Activated CD4-positive, alpha-beta memory T cell treated with anti-CD3 and anti-CD28 coated beads, Interleukin-2, amount 10 ng/mL, durations not matched to agents 7 days and 5 days (primary cell): ENCODE measurements at regions of chr12 and their contacts with region 1.

Region 1: DNA sequence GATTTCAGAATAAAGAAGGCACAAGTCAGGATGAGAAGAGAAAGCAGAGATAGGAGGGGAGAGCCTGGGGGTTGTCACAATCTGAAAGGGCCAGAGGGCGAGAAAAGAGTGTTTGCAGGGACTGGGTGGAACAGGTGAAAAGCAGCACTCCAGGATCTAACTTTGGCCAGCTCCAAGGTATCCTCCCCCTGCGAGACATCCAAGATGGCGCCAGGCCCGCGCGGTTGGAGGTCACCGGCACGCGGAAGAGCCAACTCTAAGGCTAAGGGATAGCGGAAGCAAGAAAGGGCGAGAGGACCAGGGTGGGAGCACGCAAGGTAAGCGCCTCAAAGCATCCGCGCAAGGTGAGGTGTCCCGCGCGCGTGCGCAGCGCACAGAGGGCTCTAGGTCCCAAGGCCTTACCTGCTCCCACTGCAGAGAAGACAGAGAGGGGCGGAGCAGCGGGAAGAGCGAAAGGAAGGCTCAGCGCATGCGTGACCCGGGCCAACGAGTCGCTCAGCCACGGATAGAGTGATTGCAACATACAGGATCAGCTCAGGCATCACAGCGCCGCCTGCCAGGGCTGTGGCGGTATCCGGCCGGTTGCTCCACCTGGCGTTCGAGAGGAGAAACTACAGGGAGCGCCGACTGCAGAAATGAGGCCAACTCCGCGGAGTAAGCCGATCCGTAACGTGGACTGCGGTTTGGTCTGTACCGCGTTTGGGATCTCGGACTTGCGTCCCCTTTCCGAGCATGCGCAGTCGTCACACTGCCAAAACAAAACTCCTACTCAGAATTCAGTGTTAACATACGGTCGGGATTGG is at the start of gene ATP5MC2:
- DNase-seq: peak; percentile 97
- H3K4me3 Mint-ChIP-seq: peak within 1 kb of the TSS; percentile 85
- H3K27ac Mint-ChIP-seq: peak within 1 kb of the TSS; percentile 91
- H3K4me1 Mint-ChIP-seq: peaks cover 40% of the 10 kb centered on the region
- H3K27me3 Mint-ChIP-seq: peaks cover 29% of the 10 kb centered on the region
- total RNA-seq, gene ATP5MC2: 341 to 347 TPM

Region 2: GRCh38 chr12:53500776-53501614 is 174.9 kb before region 1 on chr12 and contains the start of gene TARBP2:
- CTCF ChIA-PET with region 1: interaction called, 5 read pairs
- POLR2A ChIA-PET with region 1: interaction called, 14 read pairs
- DNase-seq: peak; percentile 96
- H3K4me3 Mint-ChIP-seq: peak within 1 kb of the TSS; percentile 80
- H3K27ac Mint-ChIP-seq: peak within 1 kb of the TSS; percentile 97
- H3K4me1 Mint-ChIP-seq: peaks cover 47% of the 10 kb centered on the region
- H3K27me3 Mint-ChIP-seq: no peaks in the 10 kb centered on the region
- total RNA-seq, gene TARBP2: 24.5 to 28.0 TPM

Region 3: DNA sequence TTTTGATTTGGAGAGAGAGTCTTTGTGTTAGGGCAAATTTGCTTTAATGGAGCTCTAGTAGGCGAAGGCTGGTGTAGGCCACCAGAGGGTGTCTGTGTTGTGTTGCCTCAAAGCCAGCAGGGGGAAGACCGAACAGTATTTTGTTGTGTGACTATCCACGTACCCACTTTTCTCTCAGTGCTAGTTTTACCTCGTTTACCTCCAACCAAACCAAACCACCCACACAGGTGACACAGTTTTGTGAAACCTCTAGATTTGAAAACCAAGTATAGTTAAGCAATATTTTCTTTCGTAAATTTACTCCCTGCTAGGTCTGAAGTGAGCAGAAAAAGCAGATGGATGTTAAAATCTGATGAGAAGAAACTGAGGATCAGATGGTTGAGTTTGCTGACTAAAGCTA is 132.3 kb before region 1 on chr12:
- CTCF ChIA-PET with region 1: interaction called, 71 read pairs
- POLR2A ChIA-PET with region 1: interaction called, 20 read pairs
- DNase-seq: peak; percentile 51
- H3K4me3 Mint-ChIP-seq: no peak overlapping the region
- H3K27ac Mint-ChIP-seq: no peak overlapping the region
- H3K4me1 Mint-ChIP-seq: peaks cover 9% of the 10 kb centered on the region
- H3K27me3 Mint-ChIP-seq: no peaks in the 10 kb centered on the region

Region 4: DNA sequence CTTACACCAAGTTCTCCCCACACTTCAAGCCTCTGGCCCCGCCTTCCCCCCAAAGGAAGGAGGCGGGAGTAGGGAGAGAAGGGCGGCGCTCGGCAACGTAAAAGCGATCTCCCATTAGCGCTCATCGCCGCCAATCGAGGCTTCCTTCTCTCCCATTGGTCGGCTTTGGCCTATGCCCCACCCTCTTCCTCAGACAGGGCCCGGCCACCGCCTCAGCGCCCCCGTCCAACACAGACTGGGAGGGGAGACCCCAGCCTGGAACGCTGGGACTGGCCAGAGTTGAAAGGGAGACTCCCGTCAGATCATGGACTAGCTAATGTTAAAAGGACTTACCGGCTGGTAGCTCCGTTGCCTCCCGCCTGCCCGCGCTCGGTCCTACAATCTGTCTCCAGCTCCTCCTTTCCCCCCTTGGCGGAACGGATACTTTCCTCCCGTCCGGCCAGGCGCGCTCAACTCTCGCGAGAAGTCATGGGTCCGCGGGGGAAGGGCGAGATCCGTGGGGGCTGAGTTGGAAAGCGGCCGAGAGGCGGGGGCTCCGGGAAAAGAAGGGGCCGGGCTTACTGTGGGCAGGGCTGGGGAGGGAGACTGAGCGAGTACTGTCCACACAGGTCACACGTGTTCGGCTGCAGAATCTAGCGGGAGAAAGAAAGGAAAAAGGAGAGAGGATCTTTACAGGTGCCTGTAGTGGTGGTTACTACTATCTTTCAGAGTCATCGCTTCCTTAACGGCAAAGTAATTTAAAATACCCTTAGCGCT is 49.7 kb before region 1 on chr12 and contains the start of gene ATF7:
- CTCF ChIA-PET with region 1: interaction called, 13 read pairs
- POLR2A ChIA-PET with region 1: interaction called, 34 read pairs
- DNase-seq: peak; percentile 98
- H3K4me3 Mint-ChIP-seq: peak within 1 kb of the TSS; percentile 99
- H3K27ac Mint-ChIP-seq: peak within 1 kb of the TSS; percentile 87
- H3K4me1 Mint-ChIP-seq: peaks cover 38% of the 10 kb centered on the region
- H3K27me3 Mint-ChIP-seq: peaks cover 4% of the 10 kb centered on the region
- total RNA-seq, gene ATF7: 21.4 to 24.0 TPM

Region 5: GRCh38 chr12:53727310-53728041 is 51.6 kb after region 1 on chr12 and contains the start of gene CALCOCO1:
- CTCF ChIA-PET with region 1: interaction called, 6 read pairs
- POLR2A ChIA-PET with region 1: interaction called, 13 read pairs
- DNase-seq: peak; percentile 98
- H3K4me3 Mint-ChIP-seq: peak within 1 kb of the TSS; percentile 87
- H3K27ac Mint-ChIP-seq: peak within 1 kb of the TSS; percentile 69
- H3K4me1 Mint-ChIP-seq: peaks cover 33% of the 10 kb centered on the region
- H3K27me3 Mint-ChIP-seq: no peaks in the 10 kb centered on the region
- total RNA-seq, gene CALCOCO1: 80.5 to 83.0 TPM